HEK293T (cell line): ENCODE measurements at regions of chr11 and their contacts with region 1.

Region 1: DNA sequence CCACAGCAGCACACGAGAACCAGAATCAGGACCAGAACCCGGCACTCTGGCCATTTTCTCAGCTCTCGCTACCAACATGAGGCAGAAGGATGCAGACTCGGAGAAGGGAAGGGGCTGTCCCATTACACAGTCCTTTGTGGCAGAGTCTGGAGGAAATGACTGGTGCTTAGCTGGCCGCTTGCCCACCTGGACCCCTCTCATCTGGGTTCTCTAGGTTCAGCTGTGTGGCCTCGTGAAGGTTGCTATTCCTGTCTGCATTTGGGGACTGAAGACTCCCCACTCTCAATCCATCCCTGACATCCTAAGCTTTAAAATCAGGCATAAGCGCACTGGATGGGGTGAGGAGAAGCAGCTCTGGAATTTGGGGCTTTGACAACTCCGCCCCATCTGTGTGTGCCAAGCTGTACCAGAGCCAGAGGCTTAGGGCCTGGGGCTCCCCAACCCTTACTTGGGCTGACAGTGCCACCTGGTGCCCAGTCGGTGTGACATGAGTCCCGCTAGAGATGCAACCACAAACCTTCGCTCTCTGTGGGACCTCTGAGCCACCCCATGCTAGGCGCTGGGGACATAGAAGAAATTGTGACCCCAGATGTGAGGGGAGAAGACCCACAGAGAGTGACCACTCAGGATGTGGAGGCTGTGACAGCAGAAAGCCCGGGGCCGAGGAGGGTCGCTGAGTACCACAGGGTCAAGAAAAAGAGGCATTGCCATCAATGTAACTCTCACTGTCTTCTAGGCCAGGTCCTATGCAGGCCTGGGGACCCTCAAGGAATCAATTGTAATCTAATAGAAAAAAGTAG is 35.9 kb upstream of the FCHSD2 start:
- DNase-seq: peak; percentile 76

Region 2: GRCh38 chr11:72831513-72832300 is 346.3 kb before region 1 on chr11:
- CTCF ChIA-PET with region 1: interaction called, 15 read pairs
- POLR2A ChIA-PET with region 1: no interaction called
- DNase-seq: peak; percentile 69

Region 3: GRCh38 chr11:73117071-73117470 is 60.9 kb before region 1 on chr11:
- CTCF ChIA-PET with region 1: no interaction called
- POLR2A ChIA-PET with region 1: no interaction called
- DNase-seq: no peak

Region 4: DNA sequence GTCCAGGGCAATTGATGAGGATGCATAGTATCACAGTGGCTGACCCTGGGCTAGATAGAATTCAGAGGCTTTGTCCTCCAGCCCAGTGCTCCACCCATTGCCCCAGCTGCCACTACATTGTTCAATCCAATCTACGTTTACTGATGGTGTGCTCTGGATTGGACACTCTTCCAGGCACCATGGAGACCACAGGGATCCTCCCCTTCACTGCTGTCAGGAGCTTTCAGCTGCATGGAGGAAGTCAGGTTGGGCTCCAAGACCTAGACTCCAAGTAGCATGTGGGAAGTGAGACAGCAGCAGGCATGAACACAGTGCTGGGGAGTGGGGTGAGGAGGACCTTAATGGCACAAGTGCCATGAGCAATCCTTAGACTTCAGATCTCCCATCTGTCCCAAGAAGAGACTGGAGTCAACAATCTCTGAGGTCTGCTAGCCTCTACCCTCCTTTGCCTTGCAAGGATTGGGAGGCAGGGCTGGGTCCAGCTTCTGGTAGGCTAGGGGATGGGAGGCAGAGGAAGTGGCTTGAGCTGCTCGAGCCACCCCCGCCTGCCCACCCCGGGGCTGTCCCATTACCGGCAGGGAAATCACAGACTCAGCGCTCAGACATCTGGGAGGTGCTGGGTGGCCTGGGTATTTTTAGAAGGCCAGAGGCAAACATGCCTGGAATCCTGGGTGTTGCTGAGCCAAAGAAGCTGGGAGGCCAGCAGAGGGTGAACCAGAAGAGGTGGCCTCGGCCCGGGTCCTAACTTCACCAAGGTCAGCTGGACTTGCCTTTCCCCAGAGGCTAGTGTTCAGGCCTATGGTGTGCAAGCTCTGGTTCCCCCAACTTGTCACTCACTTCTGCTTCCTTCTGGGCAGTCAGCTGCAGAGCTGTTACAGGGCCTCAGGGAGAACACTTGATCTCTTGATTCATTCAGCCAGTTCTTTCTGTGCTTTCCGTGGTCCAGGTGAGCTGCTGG is 20.6 kb before region 1 on chr11:
- CTCF ChIA-PET with region 1: no interaction called
- POLR2A ChIA-PET with region 1: no interaction called
- DNase-seq: no peak